BJ (cell line): ENCODE measurements at regions of chr10 and their contacts with region 1.

Region 1: GRCh38 chr10:124332426-124332825 is 86.3 kb downstream of the OAT start:
- DNase-seq: peak; percentile 86
- H3K4me3 ChIP-seq: no peak overlapping the region
- H3K27me3 ChIP-seq: no peaks in the 10 kb centered on the region
- CTCF ChIP-seq: no peak

Region 2: GRCh38 chr10:124152199-124152915 is 180.1 kb before region 1 on chr10:
- CTCF ChIA-PET with region 1: no interaction called
- POLR2A ChIA-PET with region 1: interaction called, 21 read pairs
- DNase-seq: no peak
- H3K4me3 ChIP-seq: no peak overlapping the region
- H3K27me3 ChIP-seq: no peaks in the 10 kb centered on the region
- CTCF ChIP-seq: no peak

Region 3: DNA sequence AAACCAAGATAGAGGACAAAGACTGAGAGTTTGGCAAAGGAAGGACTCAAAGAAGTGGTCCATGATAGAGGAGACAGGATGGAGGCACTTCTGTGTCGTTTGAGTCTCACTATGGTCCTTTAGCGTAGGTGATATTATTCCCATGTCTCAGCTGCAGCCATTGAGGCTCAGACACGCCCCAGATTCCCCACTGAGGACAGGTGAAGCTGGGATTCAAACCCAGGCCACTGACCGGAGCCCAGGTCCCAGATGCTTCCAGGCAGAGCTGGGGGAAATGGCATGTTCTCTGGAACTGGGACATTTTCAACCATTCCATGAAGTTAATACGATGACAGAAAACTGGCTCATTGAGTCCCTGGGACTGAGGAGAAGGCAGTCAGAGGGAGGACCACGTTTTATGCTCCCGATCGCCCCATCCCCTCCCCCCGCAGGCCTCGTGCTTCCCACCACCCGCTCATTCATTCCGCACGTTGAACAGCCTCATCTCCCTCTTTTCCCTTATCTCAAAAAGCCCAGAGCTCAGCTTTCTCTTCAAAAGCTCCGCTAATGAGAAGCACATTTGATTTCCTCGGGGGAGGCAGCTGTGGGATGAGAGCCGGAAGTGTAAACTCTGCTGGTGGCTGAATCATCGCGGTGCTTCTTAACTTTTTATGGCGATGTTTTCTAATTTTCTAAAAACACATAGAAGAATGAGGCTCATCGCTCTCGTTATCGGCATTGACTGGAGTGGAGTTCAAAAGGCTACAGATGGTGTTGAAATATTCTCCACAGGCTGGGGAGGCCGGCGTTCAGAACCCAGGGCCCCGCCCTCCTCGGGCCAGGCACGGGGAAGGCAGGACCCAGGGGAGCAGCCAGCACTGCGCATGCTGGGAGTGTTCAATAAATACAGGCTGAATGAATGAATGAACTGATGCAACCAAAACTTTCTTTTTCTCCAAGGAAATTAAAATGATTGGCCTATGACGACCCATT is 22.3 kb after region 1 on chr10:
- CTCF ChIA-PET with region 1: no interaction called
- POLR2A ChIA-PET with region 1: no interaction called
- DNase-seq: peak; percentile 45
- H3K4me3 ChIP-seq: peak overlapping the region; percentile 20
- H3K27me3 ChIP-seq: no peaks in the 10 kb centered on the region
- CTCF ChIP-seq: no peak